ENCODE measurements at regions of chr1 and their contacts with region 1.

Region 1: DNA sequence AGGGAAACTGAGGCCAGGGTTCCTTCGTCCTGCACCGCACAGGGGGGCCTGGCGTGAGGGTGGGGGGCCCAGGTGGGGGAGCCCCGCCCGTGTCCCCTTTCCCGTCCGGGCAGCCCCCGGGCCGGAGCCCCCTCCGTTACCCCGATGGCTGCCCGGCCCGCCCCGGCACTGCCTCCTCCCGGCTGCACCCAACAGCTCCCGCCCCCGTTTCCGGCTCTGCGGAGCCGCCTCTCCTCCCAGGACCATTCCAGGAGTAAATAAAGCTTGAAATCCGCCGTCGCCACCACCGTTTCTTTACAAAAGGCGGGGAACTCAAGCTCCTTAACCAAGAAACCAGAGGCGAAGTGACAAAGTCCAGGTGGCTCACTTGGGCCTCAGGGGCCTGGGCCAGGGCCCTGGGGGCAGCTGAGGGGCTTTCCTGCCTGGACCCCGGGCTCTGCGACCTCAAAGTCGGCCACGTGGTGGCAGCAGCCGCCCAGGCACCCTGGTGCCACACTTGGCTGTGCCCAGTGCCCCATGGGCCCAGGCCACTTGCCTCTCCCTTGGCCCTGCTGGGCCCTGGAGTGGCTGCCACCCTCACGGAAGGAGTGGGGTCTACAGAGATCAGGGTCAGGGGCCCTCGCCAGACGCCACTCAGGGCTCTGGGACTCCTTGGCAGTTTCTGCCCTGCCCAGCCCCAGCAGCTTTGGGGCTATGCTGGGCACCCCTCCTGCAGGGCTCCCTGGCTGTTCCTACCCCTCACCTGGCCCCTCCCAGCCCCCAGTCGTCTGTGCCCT is 514 bp upstream of the FAAP20 start:
- DNase-seq: peak; percentile 96
- H3K4me3 ChIP-seq: peak overlapping the region; percentile 68 to 73
- H3K27ac ChIP-seq: peak overlapping the region; percentile 85 to 94
- H3K4me1 ChIP-seq: peaks cover 0 to 41% of the 10 kb centered on the region in 2 experiments; a peak in 1 of 4 replicates
- H3K27me3 ChIP-seq: no peaks in the 10 kb centered on the region
- CTCF ChIP-seq: peak; percentile 87
- EP300 ChIP-seq: no peak
- RAD21 ChIP-seq: peak; percentile 94

Region 2: GRCh38 chr1:2014741-2015735 is 180.0 kb before region 1 on chr1:
- CTCF ChIA-PET with region 1: no interaction called
- POLR2A ChIA-PET with region 1: no interaction called
- DNase-seq: no peak
- H3K4me3 ChIP-seq: no peak overlapping the region
- H3K27ac ChIP-seq: no peak overlapping the region
- H3K4me1 ChIP-seq: no peaks in the 10 kb centered on the region; a peak in 1 of 4 replicates
- H3K27me3 ChIP-seq: peaks cover 17% of the 10 kb centered on the region; the same call in 1 of the 2 replicates
- CTCF ChIP-seq: no peak
- EP300 ChIP-seq: no peak
- RAD21 ChIP-seq: no peak

Region 3: GRCh38 chr1:2205191-2205952 is 10.3 kb after region 1 on chr1:
- CTCF ChIA-PET with region 1: interaction called, 43 read pairs
- POLR2A ChIA-PET with region 1: interaction called, 3 read pairs
- DNase-seq: no peak
- H3K4me3 ChIP-seq: peak overlapping the region; percentile 47 to 48; a peak in 2 of 4 replicates
- H3K27ac ChIP-seq: peak overlapping the region; percentile 36 to 69; a peak in 1 of 4 replicates
- H3K4me1 ChIP-seq: peaks cover 9 to 31% of the 10 kb centered on the region in 2 experiments; a peak in 2 of 4 replicates
- H3K27me3 ChIP-seq: no peaks in the 10 kb centered on the region
- CTCF ChIP-seq: no peak
- EP300 ChIP-seq: no peak
- RAD21 ChIP-seq: no peak

Region 4: GRCh38 chr1:2227346-2228153 is 32.5 kb after region 1 on chr1:
- CTCF ChIA-PET with region 1: interaction called, 18 read pairs
- POLR2A ChIA-PET with region 1: interaction called, 5 read pairs
- DNase-seq: peak; percentile 100
- H3K4me3 ChIP-seq: peak overlapping the region; percentile 68 to 80
- H3K27ac ChIP-seq: peak overlapping the region; percentile 80 to 94
- H3K4me1 ChIP-seq: peaks cover 0 to 37% of the 10 kb centered on the region in 2 experiments; a peak in 2 of 4 replicates
- H3K27me3 ChIP-seq: no peaks in the 10 kb centered on the region
- CTCF ChIP-seq: no peak
- EP300 ChIP-seq: no peak
- RAD21 ChIP-seq: no peak

Region 5: GRCh38 chr1:2314803-2315673 is 120.0 kb after region 1 on chr1:
- CTCF ChIA-PET with region 1: interaction called, 32 read pairs
- POLR2A ChIA-PET with region 1: interaction called, 3 read pairs
- DNase-seq: peak; percentile 97
- H3K4me3 ChIP-seq: peak overlapping the region; percentile 50 to 51; a peak in 3 of 4 replicates
- H3K27ac ChIP-seq: peak overlapping the region in 1 of 2 experiments; percentile 83; a peak in 2 of 4 replicates
- H3K4me1 ChIP-seq: peaks cover 0 to 49% of the 10 kb centered on the region in 2 experiments; a peak in 1 of 4 replicates
- H3K27me3 ChIP-seq: no peaks in the 10 kb centered on the region
- CTCF ChIP-seq: peak; percentile 56
- EP300 ChIP-seq: no peak
- RAD21 ChIP-seq: no peak

Region 6: GRCh38 chr1:2335721-2336455 is 140.8 kb after region 1 on chr1:
- CTCF ChIA-PET with region 1: interaction called, 11 read pairs
- POLR2A ChIA-PET with region 1: no interaction called
- DNase-seq: no peak
- H3K4me3 ChIP-seq: no peak overlapping the region
- H3K27ac ChIP-seq: no peak overlapping the region
- H3K4me1 ChIP-seq: peaks cover 0 to 3% of the 10 kb centered on the region in 2 experiments; a peak in 1 of 4 replicates
- H3K27me3 ChIP-seq: no peaks in the 10 kb centered on the region
- CTCF ChIP-seq: no peak
- EP300 ChIP-seq: no peak
- RAD21 ChIP-seq: no peak